Mammary epithelial cell (primary cell): ENCODE measurements at regions of chr15 and their contacts with region 1.

Region 1: DNA sequence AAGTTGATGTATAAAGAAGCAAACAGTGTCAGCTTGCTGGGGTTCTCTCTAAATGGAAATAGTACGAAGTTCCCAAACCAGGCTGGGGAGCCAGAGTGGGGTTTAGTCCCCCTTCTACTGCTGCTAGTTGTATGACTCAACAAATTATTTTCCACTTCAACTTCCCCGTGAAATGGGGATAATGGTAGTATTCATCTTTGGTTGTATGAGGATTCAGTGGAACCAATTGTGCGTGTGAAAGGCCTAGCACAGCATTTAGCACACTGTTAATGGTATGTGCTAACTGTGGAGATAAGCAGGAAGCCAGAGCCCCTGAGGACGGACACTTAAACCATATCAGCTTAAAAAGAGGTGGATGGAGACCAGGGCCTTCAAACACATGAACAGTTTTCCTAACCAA is 4.2 kb downstream of the SORD start:
- DNase-seq: no peak
- H3K4me3 ChIP-seq: no peak overlapping the region
- H3K27ac ChIP-seq: no peak overlapping the region
- H3K4me1 ChIP-seq: peaks cover 11% of the 10 kb centered on the region
- H3K27me3 ChIP-seq: no peaks in the 10 kb centered on the region
- CTCF ChIP-seq: no peak

Region 2: DNA sequence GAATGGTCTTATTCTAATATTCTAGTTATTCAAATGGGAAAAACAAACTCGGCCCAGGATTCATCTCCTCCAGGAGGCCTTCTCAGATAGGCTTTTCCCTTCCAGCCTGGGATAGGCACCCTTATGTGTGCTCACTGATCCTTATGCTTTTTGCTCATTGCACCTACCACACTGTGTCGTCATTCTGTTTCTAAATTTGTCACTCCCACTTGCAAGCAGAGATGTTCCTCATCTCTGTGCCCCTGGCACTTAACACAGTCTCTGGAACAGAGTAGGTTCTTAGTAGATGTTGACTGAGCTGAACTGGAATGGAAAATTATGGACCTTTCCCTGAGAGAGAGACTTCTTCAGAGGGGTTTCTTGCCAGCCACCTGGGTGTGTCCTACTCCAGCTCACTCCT is 345.0 kb before region 1 on chr15:
- CTCF ChIA-PET with region 1: no interaction called
- dilution Hi-C with region 1: no loop called
- in situ Hi-C with region 1: no loop called
- intact Hi-C with region 1: no loop called
- DNase-seq: no peak
- H3K4me3 ChIP-seq: no peak overlapping the region
- H3K27ac ChIP-seq: no peak overlapping the region
- H3K4me1 ChIP-seq: no peaks in the 10 kb centered on the region
- H3K27me3 ChIP-seq: no peaks in the 10 kb centered on the region
- CTCF ChIP-seq: no peak

Region 3: DNA sequence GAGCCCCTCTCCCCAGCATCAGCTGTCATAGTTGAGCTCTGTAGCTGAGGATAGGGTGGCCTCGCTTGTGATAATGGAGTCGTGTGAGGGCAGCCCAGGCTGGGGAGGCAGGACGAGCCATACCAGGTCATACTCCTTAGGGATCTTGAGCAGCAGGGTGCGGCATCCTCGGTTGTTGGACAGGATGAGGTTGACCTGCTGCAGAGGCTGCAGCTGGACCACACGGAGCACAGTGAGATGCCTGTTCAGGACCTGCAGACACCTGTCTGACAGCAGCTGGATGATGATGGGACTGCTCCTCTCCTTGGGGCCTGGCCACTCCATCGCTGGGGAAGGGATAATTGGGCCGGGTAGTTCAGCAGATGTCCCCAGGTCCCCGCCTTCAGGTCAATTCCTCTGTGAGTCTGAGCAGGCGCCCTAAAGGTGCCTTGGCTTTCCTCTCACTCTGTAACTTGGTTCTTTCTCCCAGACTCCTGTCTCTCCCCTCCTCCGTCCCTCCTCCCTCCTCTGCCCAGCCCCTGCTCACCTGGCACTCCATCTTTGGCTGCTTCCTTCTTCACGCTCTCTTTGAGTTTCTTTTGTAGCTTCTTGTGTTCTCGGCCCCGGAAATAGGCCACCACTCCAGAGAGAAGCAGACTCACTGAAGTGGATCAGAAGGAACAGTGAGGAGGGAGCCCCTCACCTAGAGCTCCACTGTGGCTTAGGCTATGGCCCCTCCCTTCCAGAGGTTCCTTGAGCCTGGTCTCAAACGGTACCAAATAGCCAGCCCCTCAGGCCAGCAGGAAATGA is 79.0 kb after region 1 on chr15:
- CTCF ChIA-PET with region 1: no interaction called
- dilution Hi-C with region 1: loop called (anchors 5 kb)
- in situ Hi-C with region 1: no loop called
- intact Hi-C with region 1: no loop called
- DNase-seq: no peak
- H3K4me3 ChIP-seq: no peak overlapping the region
- H3K27ac ChIP-seq: no peak overlapping the region
- H3K4me1 ChIP-seq: no peaks in the 10 kb centered on the region
- H3K27me3 ChIP-seq: peaks cover under 1% of the 10 kb centered on the region
- CTCF ChIP-seq: no peak

Region 4: DNA sequence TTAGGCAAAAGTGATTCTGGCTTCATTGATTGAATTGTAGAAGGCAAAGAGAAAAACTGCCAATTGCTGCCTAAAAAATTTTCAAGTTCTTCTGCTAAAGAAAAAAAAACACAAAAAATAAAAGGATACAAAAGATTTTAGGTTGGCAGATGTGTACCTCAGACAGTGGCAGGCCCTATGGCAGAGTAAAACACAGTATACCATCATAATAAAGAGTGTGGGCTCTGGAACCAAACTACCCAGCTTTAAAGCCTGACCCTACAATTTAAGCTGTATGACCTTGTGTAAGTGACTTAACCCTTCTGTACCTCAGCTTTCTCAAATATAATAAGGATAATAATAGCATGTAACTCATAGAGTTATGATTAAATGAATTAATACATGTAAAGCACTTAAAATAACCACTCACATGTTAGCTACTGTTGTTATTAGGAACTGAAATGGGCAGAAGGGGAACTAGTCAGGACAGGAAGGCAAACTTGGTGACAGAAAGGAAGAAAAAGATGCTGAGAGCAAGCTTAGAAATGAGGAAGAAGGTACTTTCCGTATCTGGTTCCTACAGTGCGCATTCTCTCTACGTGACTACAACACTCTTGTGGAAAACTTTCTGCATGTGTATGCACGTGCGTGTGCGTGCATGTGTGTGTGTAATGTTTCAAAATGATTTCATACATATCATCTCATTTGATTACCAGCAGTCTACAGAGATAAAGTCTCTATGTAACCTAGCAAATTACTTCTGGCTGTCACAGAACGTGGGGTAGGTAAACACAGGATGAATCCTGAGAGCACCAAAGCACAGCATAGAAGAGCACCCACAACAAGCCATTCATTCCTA is 364.7 kb after region 1 on chr15:
- CTCF ChIA-PET with region 1: no interaction called
- dilution Hi-C with region 1: no loop called
- in situ Hi-C with region 1: no loop called
- intact Hi-C with region 1: no loop called
- DNase-seq: no peak
- H3K4me3 ChIP-seq: no peak overlapping the region
- H3K27ac ChIP-seq: no peak overlapping the region
- H3K4me1 ChIP-seq: peaks cover 3% of the 10 kb centered on the region
- H3K27me3 ChIP-seq: no peaks in the 10 kb centered on the region
- CTCF ChIP-seq: no peak